Gastrocnemius medialis (tissue), 4 donors: ENCODE measurements at regions of chr1 and their contacts with region 1.

Region 1: GRCh38 chr1:225881969-225882693 is at the start of gene TMEM63A:
- DNase-seq: peak; percentile 86 to 92
- ATAC-seq: peak; percentile 70 to 73
- H3K4me3 ChIP-seq: peak within 1 kb of the TSS; percentile 77 to 99 (median 88)
- H3K27ac ChIP-seq: peak within 1 kb of the TSS; percentile 86 to 98 (median 89)
- H3K4me1 ChIP-seq: peaks cover 44 to 49% of the 10 kb centered on the region in 2 donors
- H3K27me3 ChIP-seq: no peaks in the 10 kb centered on the region
- CTCF ChIP-seq: peak; percentile 43 to 71 (median 55)
- POLR2A ChIP-seq: peak; percentile 72 to 77
- total RNA-seq, gene TMEM63A: 6.3 to 19.5 (median 10.6) TPM

Region 2: GRCh38 chr1:225652729-225653462 is 229.2 kb before region 1 on chr1 and contains the start of gene ENAH:
- in situ Hi-C with region 1: no loop called
- intact Hi-C with region 1: loop called (anchors 5 kb)
- DNase-seq: peak; percentile 78 to 82
- ATAC-seq: peak; percentile 54 to 65
- H3K4me3 ChIP-seq: peak within 1 kb of the TSS; percentile 66 to 92 (median 84)
- H3K27ac ChIP-seq: peak within 1 kb of the TSS; percentile 97 to 98 (median 98)
- H3K4me1 ChIP-seq: peaks cover 38 to 56% of the 10 kb centered on the region in 2 donors
- H3K27me3 ChIP-seq: no peaks in the 10 kb centered on the region
- CTCF ChIP-seq: peak in 1 of 5 experiments; percentile 10
- POLR2A ChIP-seq: peak; percentile 97 to 98
- total RNA-seq, gene ENAH: 56.1 to 112 (median 62.2) TPM

Region 3: DNA sequence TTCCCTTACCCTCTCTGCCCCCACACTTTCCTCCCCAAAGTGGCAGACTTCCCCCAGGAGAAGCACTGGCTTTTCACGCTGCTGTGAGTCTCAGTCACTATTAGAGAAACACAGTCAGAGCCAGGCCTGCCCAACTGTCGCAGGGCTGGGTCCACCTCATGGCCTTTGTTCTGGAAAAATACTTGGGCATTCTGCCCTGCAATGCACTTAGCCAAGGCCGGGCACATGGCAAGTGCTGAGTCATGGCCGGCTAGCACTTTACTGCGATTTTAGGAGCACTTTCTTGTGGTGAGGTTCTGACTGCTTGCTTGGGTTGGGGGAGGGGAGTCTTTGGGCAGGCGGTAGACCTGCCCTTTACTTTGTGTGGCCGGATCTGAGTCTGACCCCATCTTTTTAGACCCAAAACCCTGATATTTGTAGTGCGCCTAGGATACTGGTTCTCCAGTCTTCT is 64.5 kb before region 1 on chr1:
- in situ Hi-C with region 1: no loop called
- intact Hi-C with region 1: loop called (anchors 2 kb)
- DNase-seq: peak; percentile 88 to 91
- ATAC-seq: peak; percentile 73 to 78
- H3K4me3 ChIP-seq: peak overlapping the region; percentile 1 to 22 (median 2)
- H3K27ac ChIP-seq: peak overlapping the region; percentile 94 to 97 (median 96)
- H3K4me1 ChIP-seq: peaks cover 82 to 96% of the 10 kb centered on the region in 2 donors
- H3K27me3 ChIP-seq: no peaks in the 10 kb centered on the region
- CTCF ChIP-seq: no peak
- POLR2A ChIP-seq: peak in 1 of 2 donors; percentile 27

Region 4: DNA sequence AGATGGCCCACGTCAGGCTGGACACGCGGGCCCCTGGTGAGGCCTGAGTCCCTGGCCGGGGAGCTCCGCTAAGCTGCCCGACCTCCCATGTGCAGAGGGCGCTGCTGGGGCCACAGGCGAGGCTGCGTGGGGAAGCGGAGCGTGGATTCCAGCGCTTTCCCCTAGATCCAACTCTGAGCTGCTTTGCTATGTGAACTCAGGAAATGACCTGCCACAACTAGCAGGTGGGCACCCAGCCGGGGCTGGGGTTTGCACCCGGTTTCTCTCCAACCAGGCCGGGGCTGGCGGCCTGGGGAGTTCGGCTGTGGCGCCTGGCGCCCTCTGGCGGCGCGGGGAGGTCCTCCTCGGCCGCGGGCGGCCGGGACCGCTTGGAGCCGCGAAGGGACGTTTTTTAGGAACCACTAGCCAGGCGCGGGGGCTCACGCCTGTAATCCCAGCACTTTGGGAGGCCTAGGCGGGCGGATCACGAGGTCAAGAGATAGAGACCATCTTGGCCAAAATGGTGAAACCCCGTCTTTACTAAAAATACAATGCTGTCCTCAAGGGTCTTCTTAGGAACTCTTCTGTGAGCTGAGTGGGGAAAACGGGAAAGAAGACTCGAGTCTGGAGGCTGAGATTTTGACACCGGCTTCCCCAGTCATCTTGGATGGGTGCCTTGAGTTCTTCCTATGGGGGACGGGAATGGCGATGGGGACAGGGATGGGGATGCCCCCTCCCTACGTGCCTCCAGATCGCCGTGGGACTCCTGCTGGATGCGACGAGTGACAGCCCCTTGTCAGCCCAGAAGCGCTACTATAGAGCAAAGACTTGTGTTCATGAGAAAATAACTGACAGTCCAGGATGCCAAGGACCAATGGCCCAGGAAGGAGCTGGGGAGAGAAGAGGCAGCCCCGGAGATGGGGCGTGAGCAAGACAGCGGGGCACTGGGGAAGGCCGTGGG is 29.3 kb after region 1 on chr1:
- in situ Hi-C with region 1: no loop called
- intact Hi-C with region 1: loop called (anchors 5 kb)
- DNase-seq: peak in 1 of 2 donors; percentile 40
- ATAC-seq: peak; percentile 55 to 84
- H3K4me3 ChIP-seq: peak overlapping the region in 2 of 4 donors; percentile 10 to 17
- H3K27ac ChIP-seq: no peak overlapping the region
- H3K4me1 ChIP-seq: no peaks in the 10 kb centered on the region
- H3K27me3 ChIP-seq: no peaks in the 10 kb centered on the region
- CTCF ChIP-seq: peak; percentile 66 to 92 (median 83)
- POLR2A ChIP-seq: no peak

Region 5: DNA sequence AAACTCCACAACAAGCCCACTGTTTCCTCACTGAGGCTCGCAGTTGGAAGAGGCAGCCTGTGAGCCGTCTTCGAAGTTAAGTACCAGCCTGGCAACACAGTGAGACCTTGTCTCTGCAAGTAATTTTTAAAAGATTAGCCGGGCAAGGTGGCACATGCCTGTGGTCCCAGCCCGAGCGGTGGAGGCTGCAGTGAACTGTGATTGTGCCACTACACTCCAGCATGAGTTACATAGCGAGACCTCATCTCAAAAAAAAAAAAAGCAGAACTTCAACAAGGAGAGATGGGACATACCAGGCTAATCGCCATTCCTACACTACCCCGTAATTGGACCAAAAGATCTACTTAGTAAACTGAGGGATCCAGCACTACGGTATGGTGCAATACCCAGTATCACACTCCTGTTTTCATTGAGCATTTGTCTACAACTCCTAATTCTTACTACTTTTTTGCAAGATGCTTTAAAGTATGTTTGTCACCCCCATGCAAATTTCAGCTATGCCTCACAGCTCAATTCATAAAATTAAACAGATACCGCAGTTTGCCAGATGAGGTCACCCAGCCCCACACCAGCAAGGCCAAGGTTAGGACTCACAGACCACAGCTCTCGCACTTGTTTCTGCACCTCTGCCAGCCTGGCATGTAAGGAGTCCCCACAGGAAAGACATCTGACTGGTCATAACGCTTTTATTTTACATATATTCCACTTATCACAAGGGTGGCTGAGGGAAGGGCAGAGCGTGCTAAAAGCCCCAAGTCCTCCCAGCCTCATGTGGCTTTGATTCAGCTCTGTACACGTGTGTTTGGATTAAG is 96.0 kb after region 1 on chr1:
- in situ Hi-C with region 1: no loop called
- intact Hi-C with region 1: loop called (anchors 10 kb)
- DNase-seq: no peak
- ATAC-seq: no peak
- H3K4me3 ChIP-seq: no peak overlapping the region
- H3K27ac ChIP-seq: no peak overlapping the region
- H3K4me1 ChIP-seq: peaks cover 13 to 17% of the 10 kb centered on the region in 2 donors
- H3K27me3 ChIP-seq: no peaks in the 10 kb centered on the region
- CTCF ChIP-seq: no peak
- POLR2A ChIP-seq: no peak

Region 6: DNA sequence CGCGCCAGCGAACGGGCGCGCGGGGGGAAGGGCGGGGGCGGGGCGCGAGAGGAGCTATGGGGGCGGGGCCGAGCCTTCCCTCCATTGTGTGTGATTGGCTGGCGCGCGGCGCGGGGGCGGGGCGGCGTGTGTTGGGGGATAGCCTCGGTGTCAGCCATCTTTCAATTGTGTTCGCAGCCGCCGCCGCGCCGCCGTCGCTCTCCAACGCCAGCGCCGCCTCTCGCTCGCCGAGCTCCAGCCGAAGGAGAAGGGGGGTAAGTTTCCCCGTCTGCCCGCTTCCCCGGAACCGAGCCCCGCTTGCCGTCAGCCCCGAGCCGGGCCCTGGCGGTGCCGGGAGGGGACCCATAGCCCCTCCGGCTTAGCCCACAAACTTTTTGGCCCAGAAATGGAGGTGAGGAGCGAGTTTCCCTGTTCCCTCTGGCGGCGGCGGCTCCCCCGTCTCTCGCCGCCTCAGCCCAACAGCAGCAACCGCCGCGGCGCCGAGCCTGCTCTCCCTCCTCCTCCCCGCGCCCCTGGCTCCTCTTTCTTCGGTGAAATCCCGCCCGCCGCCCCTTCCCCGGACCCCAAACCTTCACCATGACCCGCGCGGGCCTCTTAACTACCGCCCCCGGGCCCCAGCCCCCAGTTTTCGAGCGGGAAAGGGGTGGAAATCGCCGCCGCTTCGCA is 180.6 kb after region 1 on chr1 and contains the start of gene H3-3A:
- in situ Hi-C with region 1: no loop called
- intact Hi-C with region 1: loop called (anchors 5 kb)
- DNase-seq: peak; percentile 97 to 98
- ATAC-seq: peak; percentile 76
- H3K4me3 ChIP-seq: peak within 1 kb of the TSS; percentile 73 to 92 (median 78)
- H3K27ac ChIP-seq: peak within 1 kb of the TSS; percentile 94 to 99 (median 98)
- H3K4me1 ChIP-seq: peaks cover 31% of the 10 kb centered on the region in 2 donors
- H3K27me3 ChIP-seq: no peaks in the 10 kb centered on the region
- CTCF ChIP-seq: peak in 2 of 5 experiments; percentile 22 to 30
- POLR2A ChIP-seq: peak; percentile 97 to 99
- total RNA-seq, gene H3-3A: 163 to 289 (median 191) TPM

Region 7: GRCh38 chr1:226487921-226488546 is 605.9 kb after region 1 on chr1:
- in situ Hi-C with region 1: no loop called
- intact Hi-C with region 1: no loop called
- DNase-seq: no peak
- ATAC-seq: no peak
- H3K4me3 ChIP-seq: no peak overlapping the region
- H3K27ac ChIP-seq: no peak overlapping the region
- H3K4me1 ChIP-seq: no peaks in the 10 kb centered on the region
- H3K27me3 ChIP-seq: peaks cover 0 to 11% (median 0%) of the 10 kb centered on the region in 3 donors
- CTCF ChIP-seq: no peak
- POLR2A ChIP-seq: no peak